Activated CD4-positive, alpha-beta T cell treated with anti-CD3 and anti-CD28 coated beads, Interleukin-2, amount 10 ng/mL, durations not matched to agents 24 days and 14 days (primary cell): ENCODE measurements at regions of chr4 and their contacts with region 1.

Region 1: DNA sequence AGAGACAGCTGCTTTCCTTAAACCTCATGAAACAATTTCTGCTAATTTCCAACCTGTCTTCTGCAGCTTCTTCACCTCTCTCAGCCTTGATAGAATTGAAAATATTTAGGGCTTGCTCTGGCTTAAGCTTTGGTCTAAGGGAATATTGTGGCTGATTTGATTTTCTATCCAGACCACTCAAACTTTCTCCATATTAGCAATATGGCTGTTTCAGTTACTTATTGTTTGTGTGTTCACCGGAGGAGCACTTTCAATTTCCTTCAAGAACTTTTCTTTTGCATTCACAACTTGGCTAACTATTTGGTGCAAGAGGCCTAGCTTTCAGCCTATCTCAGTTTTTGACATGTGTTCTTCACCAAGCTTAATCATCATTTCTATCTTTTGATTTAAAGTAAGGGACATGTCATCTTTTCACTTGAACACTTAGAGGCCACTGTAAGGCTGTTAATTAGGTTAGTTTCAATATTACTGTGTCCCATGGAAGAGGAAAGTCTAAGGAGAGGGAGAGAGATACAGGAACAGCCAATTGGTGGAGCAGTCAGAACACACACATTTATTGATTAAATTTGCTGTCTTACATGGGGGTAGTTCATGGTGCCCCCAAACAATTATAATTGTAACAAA is 213.2 kb downstream of the RASL11B start:
- DNase-seq: no peak
- H3K4me3 Mint-ChIP-seq: peak overlapping the region; percentile 56
- H3K27ac Mint-ChIP-seq: peak overlapping the region; percentile 82
- H3K4me1 Mint-ChIP-seq: peaks cover 8% of the 10 kb centered on the region
- H3K27me3 Mint-ChIP-seq: no peaks in the 10 kb centered on the region

Region 2: GRCh38 chr4:53101191-53101581 is 25.9 kb after region 1 on chr4:
- intact Hi-C with region 1: loop called (anchors 1 kb)
- DNase-seq: no peak
- H3K4me3 Mint-ChIP-seq: no peak overlapping the region
- H3K27ac Mint-ChIP-seq: peak overlapping the region; percentile 70
- H3K4me1 Mint-ChIP-seq: peaks cover 11% of the 10 kb centered on the region
- H3K27me3 Mint-ChIP-seq: no peaks in the 10 kb centered on the region

Region 3: GRCh38 chr4:53702334-53703266 is 627.3 kb after region 1 on chr4:
- intact Hi-C with region 1: no loop called
- DNase-seq: peak; percentile 56
- H3K4me3 Mint-ChIP-seq: peak overlapping the region; percentile 9
- H3K27ac Mint-ChIP-seq: no peak overlapping the region
- H3K4me1 Mint-ChIP-seq: peaks cover 2% of the 10 kb centered on the region
- H3K27me3 Mint-ChIP-seq: no peaks in the 10 kb centered on the region